Adrenal gland (tissue), 19 donors: ENCODE measurements at regions of chr11 and their contacts with region 1.

Region 1: DNA sequence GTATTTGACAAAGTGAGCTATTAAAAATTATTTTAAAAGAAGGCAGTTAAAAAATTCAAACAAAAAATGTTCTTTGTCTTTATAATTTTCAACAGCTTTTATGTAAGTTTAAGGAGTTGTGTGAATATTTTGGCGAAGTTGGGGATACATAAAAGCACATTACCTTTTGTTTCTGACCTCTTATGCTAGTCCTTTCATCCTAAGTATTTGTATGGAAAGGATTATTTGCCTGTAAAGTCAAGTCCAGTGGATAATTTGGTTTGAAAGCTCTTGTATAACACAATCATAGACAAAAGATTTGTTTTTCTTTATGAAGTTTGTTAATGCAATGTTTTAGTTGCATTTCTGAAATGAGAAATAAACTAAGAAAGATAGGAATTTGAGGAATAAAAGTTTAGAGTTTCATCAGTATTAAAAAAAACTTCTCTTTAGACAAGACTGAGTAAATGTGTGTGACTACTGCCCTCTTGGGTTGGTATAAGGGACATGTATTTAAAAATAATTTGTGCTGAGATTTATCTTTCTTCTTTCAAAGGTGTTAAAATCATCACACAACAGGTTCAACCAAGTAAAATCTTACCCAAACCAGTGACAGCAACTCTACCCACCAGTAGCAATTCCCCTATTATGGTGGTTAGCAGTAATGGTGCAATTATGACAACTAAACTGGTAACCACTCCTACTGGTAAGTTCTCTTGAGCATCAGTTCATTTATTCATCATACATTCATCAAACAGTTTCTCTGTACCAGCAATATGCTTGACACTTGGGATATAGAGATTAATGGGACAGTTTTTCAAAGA is 68.2 kb downstream of the EMSY start:
- DNase-seq: no peak
- H3K4me3 ChIP-seq: no peak overlapping the region
- H3K27ac ChIP-seq: no peak overlapping the region
- H3K4me1 ChIP-seq: peaks cover 0 to 9% of the 10 kb centered on the region in 2 donors
- H3K27me3 ChIP-seq: no peaks in the 10 kb centered on the region
- CTCF ChIP-seq: peak in 5 of 6 experiments; percentile 23 to 55 (median 47)
- POLR2A ChIP-seq: no peak

Region 2: DNA sequence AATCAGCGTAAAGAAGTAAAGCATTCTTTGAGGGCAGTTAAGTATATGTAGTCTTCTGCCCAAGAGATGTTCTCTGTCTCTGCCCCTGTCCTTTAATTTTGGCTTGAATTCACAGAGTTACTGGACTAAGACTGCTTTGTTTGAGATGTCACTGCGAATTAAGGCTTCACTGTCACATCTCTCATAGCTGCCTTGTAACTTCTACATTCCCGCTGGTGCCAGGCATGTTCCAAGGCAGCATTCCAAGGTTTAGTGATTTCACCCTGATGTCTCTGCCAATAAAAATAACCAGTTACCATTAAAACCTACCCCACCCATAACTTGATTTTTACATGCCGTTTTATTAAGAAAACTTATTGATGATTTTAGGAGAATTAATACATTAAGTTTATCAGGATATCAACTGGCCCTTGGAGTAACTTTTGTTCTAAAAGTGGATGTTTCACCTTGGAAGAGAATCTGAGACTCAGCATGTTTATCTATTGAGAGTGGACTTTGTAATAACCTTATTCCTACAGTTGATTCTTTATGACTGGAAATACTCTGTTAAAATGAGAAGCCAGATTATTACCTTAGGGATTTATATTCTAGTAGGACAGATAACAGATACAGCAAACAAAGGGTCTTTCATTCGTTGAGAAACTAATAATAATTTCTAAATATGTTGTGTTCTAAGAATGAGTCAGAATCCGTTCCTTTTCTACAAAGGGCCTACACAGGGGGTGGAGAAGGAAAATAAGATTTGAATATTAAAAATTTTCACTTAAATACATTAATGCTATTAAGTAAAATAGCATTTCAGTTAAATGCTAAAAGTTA is 587.9 kb before region 1 on chr11:
- intact Hi-C with region 1: no loop called
- DNase-seq: peak in 4 of 7 donors; percentile 14 to 53 (median 31)
- H3K4me3 ChIP-seq: no peak overlapping the region
- H3K27ac ChIP-seq: peak overlapping the region in 1 of 5 donors; percentile 15
- H3K4me1 ChIP-seq: peaks cover 8 to 12% of the 10 kb centered on the region in 2 donors
- H3K27me3 ChIP-seq: no peaks in the 10 kb centered on the region
- CTCF ChIP-seq: no peak
- POLR2A ChIP-seq: no peak

Region 3: GRCh38 chr11:76207642-76208401 is 305.2 kb before region 1 on chr11:
- intact Hi-C with region 1: loop called in 1 of 2 experiments (anchors 10 kb)
- DNase-seq: peak; percentile 72 to 85 (median 81)
- H3K4me3 ChIP-seq: peak overlapping the region in 3 of 4 donors; percentile 62 to 86 (median 65)
- H3K27ac ChIP-seq: peak overlapping the region in 2 of 5 donors; percentile 69 to 83
- H3K4me1 ChIP-seq: peaks cover 27 to 45% of the 10 kb centered on the region in 2 donors
- H3K27me3 ChIP-seq: no peaks in the 10 kb centered on the region
- CTCF ChIP-seq: peak; percentile 85 to 98 (median 94)
- POLR2A ChIP-seq: no peak

Region 4: GRCh38 chr11:76329084-76329984 is 183.7 kb before region 1 on chr11:
- intact Hi-C with region 1: loop called in 1 of 2 experiments (anchors 10 kb)
- DNase-seq: peak in 1 of 7 donors; percentile 46
- H3K4me3 ChIP-seq: no peak overlapping the region
- H3K27ac ChIP-seq: no peak overlapping the region
- H3K4me1 ChIP-seq: no peaks in the 10 kb centered on the region
- H3K27me3 ChIP-seq: no peaks in the 10 kb centered on the region
- CTCF ChIP-seq: no peak
- POLR2A ChIP-seq: no peak